Tibial artery (tissue), 4 donors: ENCODE measurements at regions of chr18 and their contacts with region 1.

Region 1: GRCh38 chr18:26226229-26227005 is at the start of gene TAF4B:
- DNase-seq: peak; percentile 92 to 97
- H3K4me3 ChIP-seq: peak within 1 kb of the TSS; percentile 83 to 97
- H3K27ac ChIP-seq: peak within 1 kb of the TSS; percentile 75 to 79
- H3K4me1 ChIP-seq: peaks cover 0 to 12% (median 5%) of the 10 kb centered on the region in 4 donors
- H3K27me3 ChIP-seq: no peaks in the 10 kb centered on the region
- CTCF ChIP-seq: no peak

Region 2: DNA sequence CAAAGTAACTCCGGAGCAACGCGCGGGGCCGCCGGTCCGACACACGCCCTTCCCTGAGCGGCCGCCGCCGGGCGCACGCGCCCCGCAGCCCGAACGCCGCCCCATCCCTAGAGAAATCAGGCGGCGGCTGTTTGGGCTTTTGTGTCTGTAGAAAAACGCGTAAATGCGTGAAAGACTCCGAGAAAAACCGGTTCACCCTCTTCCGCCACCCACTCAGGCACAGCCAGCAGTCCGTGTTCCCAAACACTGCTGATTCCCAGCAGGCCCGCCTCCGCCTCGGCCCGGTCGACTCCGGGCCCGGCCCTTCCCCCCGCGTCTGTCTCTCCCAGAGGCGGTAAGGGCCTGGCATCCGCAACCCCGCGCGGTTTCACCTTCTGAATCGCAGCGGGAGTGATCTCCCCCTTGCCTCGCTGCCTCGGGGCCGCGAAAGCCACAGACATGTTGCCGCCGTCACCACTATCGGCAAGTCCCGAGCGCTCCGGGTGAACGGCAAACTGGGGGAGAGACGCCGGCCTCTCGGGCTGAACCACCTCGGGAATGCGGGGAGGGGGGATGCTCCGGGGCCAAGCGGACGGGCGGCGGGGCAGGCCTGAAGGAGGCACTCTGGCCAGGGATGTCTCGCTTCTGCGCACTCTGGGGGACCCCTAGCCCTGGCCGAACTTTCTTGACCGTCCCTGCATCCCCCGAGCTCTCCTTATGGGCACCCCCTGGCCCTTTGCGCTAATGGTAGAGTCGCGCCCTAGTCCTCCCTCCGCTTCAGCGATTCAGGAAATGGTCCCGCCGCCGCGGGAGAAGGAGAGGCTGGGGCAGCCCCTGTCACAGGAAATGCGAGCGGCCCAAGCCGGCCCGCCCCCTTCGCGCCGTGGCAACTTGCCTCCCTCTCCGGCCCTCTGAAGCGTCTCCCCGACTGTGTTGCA is 136.0 kb before region 1 on chr18 and contains the start of gene SS18:
- intact Hi-C with region 1: loop called (anchors 5 kb)
- DNase-seq: peak; percentile 94 to 97
- H3K4me3 ChIP-seq: peak within 1 kb of the TSS; percentile 77 to 81
- H3K27ac ChIP-seq: peak within 1 kb of the TSS; percentile 92 to 94
- H3K4me1 ChIP-seq: peaks cover 0 to 33% (median 11%) of the 10 kb centered on the region in 4 donors
- H3K27me3 ChIP-seq: no peaks in the 10 kb centered on the region
- CTCF ChIP-seq: peak in 1 of 2 experiments; percentile 3

Region 3: DNA sequence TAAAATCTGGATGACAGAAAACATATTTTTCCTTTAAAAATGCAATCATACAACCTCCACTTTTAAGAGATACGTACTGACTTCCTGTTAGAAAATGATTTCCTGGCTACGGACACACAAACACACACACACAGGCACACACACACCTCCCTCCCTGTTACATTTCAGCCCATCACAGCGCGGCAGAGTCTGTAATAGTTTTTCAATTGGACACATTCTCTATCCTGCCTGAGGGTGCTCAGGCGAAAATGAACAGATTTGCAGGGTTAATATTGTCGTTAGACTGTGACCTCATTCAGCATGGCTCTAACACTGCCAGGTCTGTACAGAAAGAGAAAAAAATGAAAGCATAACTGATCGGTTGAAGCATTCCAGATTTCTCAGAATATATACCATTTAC is 277.0 kb after region 1 on chr18:
- intact Hi-C with region 1: no loop called
- DNase-seq: no peak
- H3K4me3 ChIP-seq: no peak overlapping the region
- H3K27ac ChIP-seq: no peak overlapping the region
- H3K4me1 ChIP-seq: no peaks in the 10 kb centered on the region
- H3K27me3 ChIP-seq: no peaks in the 10 kb centered on the region
- CTCF ChIP-seq: no peak